PC-9 (cell line): ENCODE measurements at regions of chr7 and their contacts with region 1.

Region 1: GRCh38 chr7:156582591-156583123 is 57.9 kb upstream of the RNF32 start:
- DNase-seq: no peak
- H3K4me3 ChIP-seq: no peak overlapping the region
- H3K27ac ChIP-seq: no peak overlapping the region
- H3K4me1 ChIP-seq: no peaks in the 10 kb centered on the region
- H3K27me3 ChIP-seq: peaks cover 84% of the 10 kb centered on the region
- CTCF ChIP-seq: peak; percentile 34; the same call in 1 of the 2 replicates

Region 2: DNA sequence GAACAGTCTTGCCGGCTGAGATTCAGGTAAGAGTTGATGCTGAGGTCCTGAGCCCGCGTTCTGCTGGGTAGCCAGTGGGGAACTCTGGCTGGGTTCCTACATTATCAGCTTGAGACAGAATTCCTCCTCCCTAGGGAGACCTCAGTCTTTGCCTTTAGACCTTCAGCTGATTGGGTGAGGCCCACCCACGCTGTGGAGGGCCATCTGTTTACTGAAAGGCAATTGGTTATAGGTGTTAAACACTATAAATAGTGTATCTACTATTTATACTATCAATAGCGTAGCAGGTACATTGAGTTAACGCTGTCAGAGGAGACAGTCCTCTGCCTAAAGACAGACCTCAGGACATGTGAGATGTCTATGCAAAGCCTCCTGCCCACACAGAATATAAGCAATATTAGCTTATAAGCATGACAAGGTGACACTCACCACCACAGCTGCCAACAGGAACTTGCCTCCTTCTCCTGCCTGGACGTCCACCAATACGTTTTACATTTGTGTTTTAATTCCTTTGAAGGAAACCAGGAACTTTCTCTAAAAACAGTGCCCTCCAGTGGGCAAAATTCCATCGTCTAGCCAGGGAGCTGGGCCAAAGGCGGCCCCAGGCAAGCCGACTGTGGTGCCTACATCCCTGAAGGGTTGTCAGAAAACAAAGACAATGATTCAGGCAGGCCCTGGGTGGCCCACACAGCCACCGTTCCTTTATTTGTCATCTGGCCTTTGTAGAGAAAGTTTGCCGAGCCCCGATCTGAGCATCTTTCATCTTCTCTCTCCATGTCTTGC is 1226.1 kb before region 1 on chr7:
- CTCF ChIA-PET with region 1: no interaction called
- POLR2A ChIA-PET with region 1: no interaction called
- intact Hi-C with region 1: no loop called
- DNase-seq: peak in 1 of 2 experiments; percentile 49
- H3K4me3 ChIP-seq: no peak overlapping the region
- H3K27ac ChIP-seq: no peak overlapping the region
- H3K4me1 ChIP-seq: no peaks in the 10 kb centered on the region
- H3K27me3 ChIP-seq: peaks cover 96% of the 10 kb centered on the region
- CTCF ChIP-seq: peak; percentile 68

Region 3: GRCh38 chr7:156616269-156617202 is 33.9 kb after region 1 on chr7:
- CTCF ChIA-PET with region 1: no interaction called
- POLR2A ChIA-PET with region 1: no interaction called
- intact Hi-C with region 1: no loop called
- DNase-seq: no peak
- H3K4me3 ChIP-seq: no peak overlapping the region
- H3K27ac ChIP-seq: no peak overlapping the region
- H3K4me1 ChIP-seq: no peaks in the 10 kb centered on the region
- H3K27me3 ChIP-seq: peaks cover 82% of the 10 kb centered on the region
- CTCF ChIP-seq: no peak

Region 4: GRCh38 chr7:158120716-158121115 is 1538.1 kb after region 1 on chr7:
- CTCF ChIA-PET with region 1: no interaction called
- POLR2A ChIA-PET with region 1: interaction called, 11 read pairs
- intact Hi-C with region 1: no loop called
- DNase-seq: no peak
- H3K4me3 ChIP-seq: no peak overlapping the region
- H3K27ac ChIP-seq: no peak overlapping the region
- H3K4me1 ChIP-seq: no peaks in the 10 kb centered on the region
- H3K27me3 ChIP-seq: peaks cover 57% of the 10 kb centered on the region
- CTCF ChIP-seq: no peak